Pancreas (tissue), 10 donors: ENCODE measurements at regions of chr11 and their contacts with region 1.

Region 1: DNA sequence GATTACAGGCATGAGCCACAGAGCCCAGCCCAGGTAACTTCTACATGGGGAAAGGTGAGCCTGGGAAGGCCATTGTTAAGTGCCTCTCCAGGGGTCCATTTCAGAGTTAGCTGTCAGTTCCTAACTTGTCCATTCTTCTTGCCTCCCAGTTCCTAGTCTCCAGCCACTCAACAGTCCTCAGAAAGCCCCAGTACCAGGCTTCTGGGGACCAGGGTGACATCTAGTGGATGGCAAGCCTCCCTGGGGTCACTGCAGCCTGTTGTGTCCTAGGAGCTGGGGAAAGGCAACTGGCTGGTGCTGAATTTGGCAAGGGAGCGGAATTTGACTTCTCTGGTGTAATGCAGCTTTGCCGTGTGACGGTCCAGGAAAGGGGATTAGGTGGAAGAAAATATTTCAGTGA is 2.1 kb downstream of the LGALS12 start:
- DNase-seq: peak; percentile 63 to 80 (median 73)
- ATAC-seq: peak; percentile 80 to 91 (median 84)
- H3K4me3 ChIP-seq: no peak overlapping the region
- H3K27ac ChIP-seq: no peak overlapping the region
- H3K4me1 ChIP-seq: peaks cover 14 to 37% (median 16%) of the 10 kb centered on the region in 3 donors
- H3K27me3 ChIP-seq: no peaks in the 10 kb centered on the region
- CTCF ChIP-seq: peak in 3 of 4 donors; percentile 34 to 39 (median 36)

Region 2: DNA sequence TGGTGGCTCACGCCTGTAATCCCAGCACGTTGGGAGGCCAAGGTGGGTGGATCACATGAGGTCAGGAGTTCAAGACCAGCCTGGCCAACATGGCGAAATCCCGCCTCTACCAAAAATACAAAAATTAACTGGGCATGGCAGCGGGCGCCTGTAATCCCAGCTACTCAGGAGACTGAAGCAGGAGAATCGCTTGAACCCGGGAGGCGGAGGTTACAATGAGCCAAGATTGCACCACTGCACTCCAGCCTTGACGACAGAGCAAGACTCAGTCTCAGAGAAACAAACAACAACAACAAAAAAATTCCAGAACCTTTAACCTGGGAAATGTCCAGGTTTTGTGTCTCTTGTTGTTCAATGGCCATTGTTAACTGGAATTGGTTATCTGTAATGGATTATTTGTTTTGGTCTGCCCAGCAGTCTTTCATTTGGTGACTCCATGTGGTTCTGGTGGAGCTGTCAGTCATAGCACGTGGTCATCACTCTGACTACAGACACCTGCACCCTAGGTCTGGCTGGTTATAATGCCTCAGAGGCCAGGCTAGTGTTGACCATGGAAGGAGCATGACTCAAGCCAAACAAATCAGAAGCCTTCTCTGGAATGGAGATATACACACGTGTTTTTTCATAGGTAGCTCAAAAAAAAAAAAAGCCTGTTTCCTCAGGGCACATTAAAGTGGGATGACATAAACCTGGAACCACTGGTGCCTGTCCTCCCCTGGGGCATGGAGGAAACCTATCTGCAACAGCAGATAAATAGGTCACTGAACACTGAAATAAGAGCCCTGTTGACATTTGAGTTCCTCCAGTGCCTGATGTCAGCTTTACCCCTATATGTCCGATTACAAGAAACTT is 114.1 kb after region 1 on chr11:
- intact Hi-C with region 1: loop called in 2 of 3 experiments (anchors 10 kb)
- DNase-seq: peak in 4 of 6 donors; percentile 44 to 79 (median 58)
- ATAC-seq: peak; percentile 90 to 96 (median 94)
- H3K4me3 ChIP-seq: no peak overlapping the region
- H3K27ac ChIP-seq: no peak overlapping the region
- H3K4me1 ChIP-seq: peaks cover 5 to 21% (median 9%) of the 10 kb centered on the region in 3 donors
- H3K27me3 ChIP-seq: no peaks in the 10 kb centered on the region
- CTCF ChIP-seq: no peak